ENCODE measurements at regions of chr5 and their contacts with region 1.

Region 1: DNA sequence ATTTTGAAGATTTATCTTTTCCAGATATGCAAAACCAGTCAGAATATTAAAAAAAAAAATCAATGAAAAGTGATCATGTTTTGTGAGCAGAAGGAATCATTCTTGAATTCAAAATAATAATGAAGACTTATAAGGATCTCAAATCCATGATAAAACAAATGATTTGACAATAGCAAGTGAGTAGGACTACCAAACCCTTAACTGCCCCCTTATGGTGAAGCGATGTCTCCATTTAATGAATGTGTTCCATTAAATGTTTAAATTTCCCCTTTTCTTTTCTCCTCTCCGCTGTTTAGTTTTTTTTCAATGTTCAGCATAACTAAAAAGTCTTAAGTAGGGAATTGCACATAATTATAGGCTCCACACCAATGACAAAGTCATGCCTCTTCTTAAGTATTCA is 12.2 kb upstream of the MARCHF3 start:
- DNase-seq: no peak
- ATAC-seq: no peak
- H3K4me3 Mint-ChIP-seq: no peak overlapping the region
- H3K27ac Mint-ChIP-seq: no peak overlapping the region
- H3K4me1 Mint-ChIP-seq: peaks cover 10% of the 10 kb centered on the region
- H3K27me3 Mint-ChIP-seq: no peaks in the 10 kb centered on the region
- CTCF ChIP-seq: no peak

Region 2: GRCh38 chr5:126508962-126509279 is 533.7 kb before region 1 on chr5:
- CTCF ChIA-PET with region 1: no interaction called
- POLR2A ChIA-PET with region 1: no interaction called
- intact Hi-C with region 1: no loop called
- DNase-seq: no peak
- ATAC-seq: no peak
- H3K4me3 Mint-ChIP-seq: no peak overlapping the region
- H3K27ac Mint-ChIP-seq: no peak overlapping the region
- H3K4me1 Mint-ChIP-seq: peaks cover 10% of the 10 kb centered on the region
- H3K27me3 Mint-ChIP-seq: no peaks in the 10 kb centered on the region
- CTCF ChIP-seq: no peak

Region 3: DNA sequence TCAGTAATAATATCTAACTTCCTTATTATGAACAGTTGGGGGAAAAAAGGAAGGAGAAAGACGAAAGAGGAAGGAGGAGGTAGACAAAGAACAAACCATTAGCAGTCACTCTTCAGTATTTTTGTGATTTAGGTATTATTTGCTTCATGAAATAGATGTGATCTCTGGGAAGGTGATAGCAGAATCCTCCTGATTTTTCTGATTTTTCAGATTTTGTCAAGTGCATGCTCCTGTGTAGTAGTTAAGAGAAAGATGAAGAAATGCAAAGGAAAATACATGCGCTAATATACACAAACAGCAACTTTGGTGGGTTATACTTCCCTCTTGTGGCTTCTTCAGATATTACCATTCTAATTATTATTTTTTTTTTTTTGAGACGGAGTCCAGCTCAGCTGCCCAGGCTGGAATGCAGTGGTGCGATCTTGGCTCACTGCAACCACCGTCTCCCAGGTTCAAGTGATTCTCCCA is 234.0 kb before region 1 on chr5:
- CTCF ChIA-PET with region 1: no interaction called
- POLR2A ChIA-PET with region 1: no interaction called
- intact Hi-C with region 1: no loop called
- DNase-seq: no peak
- ATAC-seq: peak; percentile 66
- H3K4me3 Mint-ChIP-seq: peak overlapping the region; percentile 66
- H3K27ac Mint-ChIP-seq: peak overlapping the region; percentile 81
- H3K4me1 Mint-ChIP-seq: peaks cover 63% of the 10 kb centered on the region
- H3K27me3 Mint-ChIP-seq: no peaks in the 10 kb centered on the region
- CTCF ChIP-seq: peak; percentile 35

Region 4: DNA sequence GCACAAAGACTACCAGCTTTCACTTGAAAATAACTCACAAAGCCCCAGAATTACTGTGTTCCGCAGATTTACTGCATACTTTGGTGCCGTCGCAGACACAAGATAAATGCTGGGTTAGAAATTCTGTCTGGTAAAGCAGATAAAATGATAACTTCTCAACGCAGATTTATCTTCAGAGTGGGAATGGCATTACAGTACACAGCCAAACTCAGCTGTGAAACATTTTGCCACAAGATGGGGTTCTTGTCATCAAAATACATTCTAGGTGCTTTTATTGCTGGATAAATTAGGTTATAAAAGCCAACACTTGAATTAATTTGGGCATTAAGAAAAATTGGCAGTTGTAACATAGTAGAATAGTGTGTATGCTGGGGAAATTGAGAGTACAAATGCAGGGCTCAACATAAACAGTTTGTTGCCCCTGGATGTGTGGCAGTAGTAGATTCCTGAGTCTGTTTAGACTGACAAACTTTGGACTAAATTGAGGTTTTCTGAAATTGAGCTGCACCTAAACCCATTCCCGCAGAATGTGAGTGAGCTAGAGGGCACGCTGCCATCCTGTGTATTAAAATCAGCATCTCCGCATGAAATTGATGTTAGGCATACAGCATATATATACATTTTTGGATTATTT is 204.6 kb before region 1 on chr5:
- CTCF ChIA-PET with region 1: interaction called, 4 read pairs
- POLR2A ChIA-PET with region 1: no interaction called
- intact Hi-C with region 1: loop called (anchors 1 kb)
- DNase-seq: no peak
- ATAC-seq: peak; percentile 28
- H3K4me3 Mint-ChIP-seq: no peak overlapping the region
- H3K27ac Mint-ChIP-seq: no peak overlapping the region
- H3K4me1 Mint-ChIP-seq: no peaks in the 10 kb centered on the region
- H3K27me3 Mint-ChIP-seq: no peaks in the 10 kb centered on the region
- CTCF ChIP-seq: no peak

Measured in activated B cell treated with CpG ODN at 0.5 μM for 24 hours (primary cell).